ENCODE measurements at regions of chr18 and their contacts with region 1.

Region 1: GRCh38 chr18:28974504-28974903 is 797.6 kb upstream of the CDH2 start:
- DNase-seq: no peak
- ATAC-seq: no peak
- H3K4me3 ChIP-seq: no peak overlapping the region
- H3K27ac ChIP-seq: no peak overlapping the region
- H3K4me1 ChIP-seq: no peaks in the 10 kb centered on the region
- H3K27me3 ChIP-seq: no peaks in the 10 kb centered on the region
- CTCF ChIP-seq: no peak
- EP300 ChIP-seq: no peak
- POLR2A ChIP-seq: no peak
- RAD21 ChIP-seq: no peak

Region 2: GRCh38 chr18:29780816-29781215 is 806.3 kb after region 1 on chr18:
- CTCF ChIA-PET with region 1: no interaction called
- POLR2A ChIA-PET with region 1: no interaction called
- RAD21 ChIA-PET with region 1: no interaction called
- SMC1A ChIA-PET with region 1: no interaction called
- in situ Hi-C with region 1: no loop called
- intact Hi-C with region 1: loop called (anchors 10 kb)
- DNase-seq: no peak
- ATAC-seq: no peak
- H3K4me3 ChIP-seq: no peak overlapping the region
- H3K27ac ChIP-seq: no peak overlapping the region
- H3K4me1 ChIP-seq: no peaks in the 10 kb centered on the region
- H3K27me3 ChIP-seq: no peaks in the 10 kb centered on the region
- CTCF ChIP-seq: no peak
- EP300 ChIP-seq: no peak
- POLR2A ChIP-seq: no peak
- RAD21 ChIP-seq: no peak

Region 3: DNA sequence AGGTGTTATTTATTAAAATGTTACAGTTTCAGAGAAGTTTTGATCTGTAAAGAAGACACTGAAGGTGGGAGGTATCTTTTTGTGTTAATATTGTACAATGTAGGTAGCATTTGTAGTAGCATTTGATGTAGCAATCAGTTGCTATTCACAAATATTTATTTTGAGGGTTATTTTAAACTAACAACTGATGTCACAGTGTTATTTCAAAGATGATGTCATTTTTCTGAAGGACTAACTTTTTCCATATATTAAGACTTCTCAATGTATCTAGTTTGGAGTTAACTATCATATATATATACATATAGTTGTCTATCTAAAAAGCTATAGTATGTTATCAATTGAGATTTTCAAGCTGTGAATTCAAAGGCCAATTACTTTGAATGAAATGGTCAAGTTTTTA is 1064.7 kb after region 1 on chr18:
- CTCF ChIA-PET with region 1: no interaction called
- POLR2A ChIA-PET with region 1: no interaction called
- RAD21 ChIA-PET with region 1: no interaction called
- SMC1A ChIA-PET with region 1: no interaction called
- in situ Hi-C with region 1: no loop called
- intact Hi-C with region 1: no loop called
- DNase-seq: no peak
- ATAC-seq: no peak
- H3K4me3 ChIP-seq: no peak overlapping the region
- H3K27ac ChIP-seq: no peak overlapping the region
- H3K4me1 ChIP-seq: no peaks in the 10 kb centered on the region
- H3K27me3 ChIP-seq: no peaks in the 10 kb centered on the region
- CTCF ChIP-seq: no peak
- EP300 ChIP-seq: no peak
- POLR2A ChIP-seq: no peak
- RAD21 ChIP-seq: no peak